Posterior vena cava (tissue), 2 donors: ENCODE measurements at regions of chr3 and their contacts with region 1.

Region 1: GRCh38 chr3:187243933-187244524 is 46.7 kb downstream of the RTP1 start:
- DNase-seq: no peak

Region 2: DNA sequence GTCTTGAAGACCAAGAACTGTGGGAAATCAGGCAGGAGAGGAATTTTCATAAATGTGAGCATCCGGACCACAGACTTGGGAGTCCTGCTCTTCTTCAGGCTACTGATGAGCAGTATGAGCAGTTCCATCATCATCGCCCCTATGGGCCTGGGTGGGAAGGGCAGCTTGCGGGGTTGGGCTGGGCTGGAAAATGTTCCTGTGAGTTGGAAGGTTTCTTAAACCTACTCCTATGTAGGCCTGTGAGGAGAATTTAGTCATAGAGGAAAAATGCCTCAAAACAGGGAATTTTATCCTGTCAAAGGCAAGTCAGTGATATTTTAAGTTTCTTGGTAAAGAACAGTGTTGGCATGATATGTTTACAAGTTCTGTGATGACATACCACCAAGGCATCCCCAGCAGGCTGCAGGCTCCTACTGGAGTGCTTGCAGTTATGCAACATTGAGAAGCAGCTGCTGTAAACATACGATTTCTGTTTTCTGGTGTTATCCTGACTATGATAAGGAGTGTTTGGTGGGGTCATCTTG is 37.2 kb after region 1 on chr3:
- intact Hi-C with region 1: loop called in 1 of 2 experiments (anchors 5 kb)
- DNase-seq: no peak